Naive thymus-derived CD4-positive, alpha-beta T cell (primary cell): ENCODE measurements at regions of chr6 and their contacts with region 1.

Region 1: GRCh38 chr6:134288538-134289203 is 29.2 kb downstream of the SGK1 start:
- DNase-seq: peak in 4 of 9 donors; percentile 6 to 50 (median 28)
- ATAC-seq: peak; percentile 81
- H3K4me3 ChIP-seq: no peak overlapping the region
- H3K4me3 Mint-ChIP-seq: peak overlapping the region in 7 of 10 donors; percentile 7 to 74 (median 46)
- H3K27ac ChIP-seq: no peak overlapping the region
- H3K27ac Mint-ChIP-seq: peak overlapping the region in 8 of 9 donors; percentile 23 to 87 (median 70)
- H3K4me1 ChIP-seq: peaks cover 7 to 9% of the 10 kb centered on the region in 2 donors
- H3K4me1 Mint-ChIP-seq: peaks cover 14 to 41% (median 20%) of the 10 kb centered on the region in 7 donors
- H3K27me3 ChIP-seq: no peaks in the 10 kb centered on the region
- H3K27me3 Mint-ChIP-seq: no peaks in the 10 kb centered on the region

Region 2: GRCh38 chr6:134235937-134236751 is 52.5 kb before region 1 on chr6:
- CTCF ChIA-PET with region 1: no interaction called
- POLR2A ChIA-PET with region 1: no interaction called
- intact Hi-C with region 1: loop called in 1 of 2 experiments (anchors 1 kb)
- DNase-seq: no peak
- ATAC-seq: peak; percentile 69
- H3K4me3 ChIP-seq: no peak overlapping the region
- H3K4me3 Mint-ChIP-seq: peak overlapping the region in 2 of 10 donors; percentile 29 to 48
- H3K27ac ChIP-seq: no peak overlapping the region
- H3K27ac Mint-ChIP-seq: peak overlapping the region in 6 of 9 donors; percentile 6 to 86 (median 43)
- H3K4me1 ChIP-seq: peaks cover 18 to 22% of the 10 kb centered on the region in 2 donors
- H3K4me1 Mint-ChIP-seq: peaks cover 8 to 50% (median 43%) of the 10 kb centered on the region in 7 donors
- H3K27me3 ChIP-seq: no peaks in the 10 kb centered on the region
- H3K27me3 Mint-ChIP-seq: no peaks in the 10 kb centered on the region

Region 3: GRCh38 chr6:134317471-134318131 is 28.9 kb after region 1 on chr6 and contains the start of gene SGK1:
- CTCF ChIA-PET with region 1: no interaction called
- POLR2A ChIA-PET with region 1: no interaction called
- intact Hi-C with region 1: loop called (anchors 2 kb)
- DNase-seq: peak; percentile 6 to 40 (median 32)
- ATAC-seq: peak; percentile 77
- H3K4me3 ChIP-seq: peak within 1 kb of the TSS; percentile 68
- H3K4me3 Mint-ChIP-seq: peak within 1 kb of the TSS; percentile 85 to 99 (median 91)
- H3K27ac ChIP-seq: peak within 1 kb of the TSS; percentile 37
- H3K27ac Mint-ChIP-seq: peak within 1 kb of the TSS in 6 of 9 donors; percentile 50 to 84 (median 77)
- H3K4me1 ChIP-seq: peaks cover 0 to 6% of the 10 kb centered on the region in 2 donors
- H3K4me1 Mint-ChIP-seq: peaks cover 2 to 47% (median 29%) of the 10 kb centered on the region in 7 donors
- H3K27me3 ChIP-seq: no peaks in the 10 kb centered on the region
- H3K27me3 Mint-ChIP-seq: peaks cover 0 to 56% (median 21%) of the 10 kb centered on the region in 5 donors
- total RNA-seq, gene SGK1: 16.4 to 443 (median 32.4) TPM

Region 4: GRCh38 chr6:134517145-134517658 is 228.5 kb after region 1 on chr6:
- CTCF ChIA-PET with region 1: no interaction called
- POLR2A ChIA-PET with region 1: no interaction called
- intact Hi-C with region 1: loop called in 1 of 2 experiments (anchors 10 kb)
- DNase-seq: peak in 1 of 9 donors; percentile 20
- ATAC-seq: no peak
- H3K4me3 ChIP-seq: no peak overlapping the region
- H3K4me3 Mint-ChIP-seq: peak overlapping the region in 2 of 10 donors; percentile 1 to 9
- H3K27ac ChIP-seq: no peak overlapping the region
- H3K27ac Mint-ChIP-seq: peak overlapping the region in 7 of 9 donors; percentile 3 to 95 (median 66)
- H3K4me1 ChIP-seq: peaks cover 0 to 24% of the 10 kb centered on the region in 2 donors
- H3K4me1 Mint-ChIP-seq: peaks cover 12 to 48% (median 34%) of the 10 kb centered on the region in 7 donors
- H3K27me3 ChIP-seq: no peaks in the 10 kb centered on the region
- H3K27me3 Mint-ChIP-seq: no peaks in the 10 kb centered on the region

Region 5: GRCh38 chr6:135270676-135271536 is 982.2 kb after region 1 on chr6:
- CTCF ChIA-PET with region 1: no interaction called
- POLR2A ChIA-PET with region 1: no interaction called
- intact Hi-C with region 1: no loop called
- DNase-seq: no peak
- ATAC-seq: no peak
- H3K4me3 ChIP-seq: no peak overlapping the region
- H3K4me3 Mint-ChIP-seq: no peak overlapping the region
- H3K27ac ChIP-seq: no peak overlapping the region
- H3K27ac Mint-ChIP-seq: no peak overlapping the region
- H3K4me1 ChIP-seq: no peaks in the 10 kb centered on the region
- H3K4me1 Mint-ChIP-seq: no peaks in the 10 kb centered on the region
- H3K27me3 ChIP-seq: no peaks in the 10 kb centered on the region
- H3K27me3 Mint-ChIP-seq: peaks cover 4 to 13% (median 9%) of the 10 kb centered on the region in 5 donors